ENCODE measurements at regions of chr1 and their contacts with region 1.

Region 1: GRCh38 chr1:145891587-145892485 is 6.2 kb upstream of the ANKRD35 start:
- DNase-seq: peak; percentile 96
- H3K4me3 ChIP-seq: peak overlapping the region; percentile 16
- H3K27ac ChIP-seq: peak overlapping the region; percentile 54
- H3K4me1 ChIP-seq: peaks cover 20% of the 10 kb centered on the region
- H3K27me3 ChIP-seq: no peaks in the 10 kb centered on the region
- CTCF ChIP-seq: peak; percentile 98

Region 2: GRCh38 chr1:145740266-145740665 is 151.6 kb before region 1 on chr1:
- CTCF ChIA-PET with region 1: interaction called, 10 read pairs
- POLR2A ChIA-PET with region 1: no interaction called
- intact Hi-C with region 1: no loop called
- DNase-seq: no peak
- H3K4me3 ChIP-seq: no peak overlapping the region
- H3K27ac ChIP-seq: no peak overlapping the region
- H3K4me1 ChIP-seq: no peaks in the 10 kb centered on the region
- H3K27me3 ChIP-seq: no peaks in the 10 kb centered on the region
- CTCF ChIP-seq: no peak

Region 3: DNA sequence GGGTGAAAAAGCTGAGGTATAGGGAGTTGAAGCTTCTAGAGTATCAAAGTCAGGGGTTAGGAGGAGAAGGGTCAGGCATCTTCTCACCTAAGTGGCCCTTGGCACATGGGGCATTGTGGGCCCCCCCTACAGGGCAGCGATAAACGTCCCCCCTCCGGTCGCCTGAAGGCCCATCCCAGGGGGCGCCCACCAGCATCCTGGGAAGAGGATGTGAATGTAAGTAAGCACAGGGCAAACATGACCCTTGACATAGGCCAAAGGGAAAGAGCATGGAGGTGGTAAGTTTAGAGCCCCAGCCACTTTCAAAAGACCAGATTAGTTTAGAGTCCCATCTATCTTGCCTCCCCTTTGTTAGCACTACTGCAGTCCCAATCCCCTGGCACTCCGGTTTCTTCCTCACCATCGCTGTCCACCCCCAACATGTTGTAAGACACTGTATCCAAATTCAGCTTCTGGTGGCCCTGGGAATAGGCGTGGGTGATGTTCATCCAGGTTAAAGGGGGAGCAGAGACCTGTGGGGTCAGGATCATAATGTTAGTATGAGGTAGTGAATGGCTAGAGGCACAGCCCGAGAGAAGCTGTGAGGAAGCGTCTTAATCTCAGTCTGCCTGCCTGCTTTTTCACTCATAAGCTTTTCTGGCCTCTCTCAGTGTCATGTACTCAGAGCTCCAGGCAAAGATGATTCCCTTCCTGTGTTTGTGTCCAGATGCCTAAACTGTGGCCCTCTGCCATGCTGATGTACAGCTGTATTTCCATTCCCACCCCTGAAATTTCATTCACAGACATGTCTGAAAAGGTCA is 15.3 kb after region 1 on chr1:
- CTCF ChIA-PET with region 1: interaction called, 13 read pairs
- POLR2A ChIA-PET with region 1: no interaction called
- intact Hi-C with region 1: loop called (anchors 1 kb)
- DNase-seq: no peak
- H3K4me3 ChIP-seq: no peak overlapping the region
- H3K27ac ChIP-seq: no peak overlapping the region
- H3K4me1 ChIP-seq: peaks cover 3% of the 10 kb centered on the region
- H3K27me3 ChIP-seq: no peaks in the 10 kb centered on the region
- CTCF ChIP-seq: no peak

Region 4: GRCh38 chr1:145912128-145912641 is 20.3 kb after region 1 on chr1:
- CTCF ChIA-PET with region 1: interaction called, 13 read pairs
- POLR2A ChIA-PET with region 1: no interaction called
- intact Hi-C with region 1: loop called (anchors 1 kb)
- DNase-seq: no peak
- H3K4me3 ChIP-seq: no peak overlapping the region
- H3K27ac ChIP-seq: no peak overlapping the region
- H3K4me1 ChIP-seq: peaks cover 3% of the 10 kb centered on the region
- H3K27me3 ChIP-seq: no peaks in the 10 kb centered on the region
- CTCF ChIP-seq: no peak

Region 5: DNA sequence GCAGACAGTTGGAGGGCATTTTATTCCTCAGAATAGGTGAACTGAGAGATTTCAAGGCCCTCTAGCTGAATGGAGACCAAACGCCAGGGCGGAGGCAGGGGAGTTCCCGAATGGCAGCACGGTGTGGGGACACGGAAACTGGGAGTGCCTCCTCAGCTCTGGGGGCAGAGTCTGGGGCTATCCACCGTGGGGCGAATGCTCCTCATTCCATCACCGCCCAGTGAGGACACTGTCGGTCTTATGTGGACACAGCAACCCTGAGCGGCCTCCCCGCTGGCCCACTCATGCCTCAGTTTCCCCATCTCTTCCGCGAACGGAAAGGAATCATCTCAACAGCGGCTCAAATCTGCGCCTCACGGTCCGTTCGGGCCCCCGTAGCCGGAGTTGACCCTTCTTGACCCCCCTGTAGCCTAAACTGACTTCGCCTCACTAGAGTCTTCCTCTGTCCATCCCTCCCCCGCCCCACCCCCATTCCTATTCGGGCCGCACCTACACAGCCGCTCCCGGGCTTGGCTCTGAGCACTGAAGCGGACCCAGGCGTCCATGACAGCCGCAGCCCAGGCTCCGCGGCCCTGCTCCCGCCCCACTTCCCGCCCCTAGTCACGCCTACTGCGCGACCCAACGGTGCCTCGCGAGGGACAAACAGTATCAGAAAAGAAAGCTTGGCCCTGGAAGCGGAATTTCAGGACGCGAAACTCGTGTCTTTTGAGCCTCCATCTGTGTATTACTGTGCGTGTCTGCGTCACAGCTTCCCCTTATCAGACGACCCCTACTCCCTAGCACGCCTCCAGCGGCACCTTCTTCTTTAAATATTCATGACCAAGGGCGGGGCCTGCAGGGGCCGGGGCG is 26.5 kb after region 1 on chr1 and contains the start of gene PEX11B:
- CTCF ChIA-PET with region 1: no interaction called
- POLR2A ChIA-PET with region 1: no interaction called
- intact Hi-C with region 1: loop called (anchors 2 kb)
- DNase-seq: peak; percentile 94
- H3K4me3 ChIP-seq: peak within 1 kb of the TSS; percentile 78
- H3K27ac ChIP-seq: peak within 1 kb of the TSS; percentile 94
- H3K4me1 ChIP-seq: peaks cover 16% of the 10 kb centered on the region
- H3K27me3 ChIP-seq: no peaks in the 10 kb centered on the region
- CTCF ChIP-seq: no peak
- total RNA-seq, gene PEX11B: 22.1 and 22.4 TPM in 2 replicates

Region 6: DNA sequence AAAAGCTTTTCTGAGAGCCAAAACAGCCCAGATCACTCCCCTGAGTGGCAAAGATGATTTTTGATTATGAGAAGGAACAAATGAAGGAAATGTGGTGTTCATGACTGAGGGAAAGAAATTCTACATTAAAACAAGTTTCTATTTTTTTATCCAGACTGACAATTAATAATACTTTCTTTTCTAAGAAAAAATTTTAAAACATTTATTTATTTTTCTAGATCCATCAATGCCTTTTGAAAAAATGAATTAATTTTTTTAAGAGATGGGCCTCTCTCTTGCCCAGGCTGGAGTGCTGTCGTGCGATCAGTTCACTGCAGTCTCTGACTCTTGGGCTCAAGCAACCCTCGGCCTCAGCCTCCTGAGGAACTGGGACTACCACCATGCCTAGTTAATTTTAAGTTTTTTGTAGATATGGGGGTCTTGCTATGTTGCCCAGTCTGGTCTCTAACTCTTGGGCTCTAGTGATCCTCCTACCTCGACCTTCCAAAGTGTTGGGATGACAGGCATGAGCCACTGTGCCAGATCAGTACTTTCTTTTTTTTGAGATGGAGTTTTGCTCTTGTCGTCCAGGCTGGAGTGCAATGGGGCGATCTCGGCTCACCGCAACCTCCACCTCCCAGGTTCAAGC is 115.8 kb after region 1 on chr1:
- CTCF ChIA-PET with region 1: interaction called, 8 read pairs
- POLR2A ChIA-PET with region 1: no interaction called
- intact Hi-C with region 1: loop called (anchors 2 kb)
- DNase-seq: no peak
- H3K4me3 ChIP-seq: no peak overlapping the region
- H3K27ac ChIP-seq: no peak overlapping the region
- H3K4me1 ChIP-seq: peaks cover 3% of the 10 kb centered on the region
- H3K27me3 ChIP-seq: no peaks in the 10 kb centered on the region
- CTCF ChIP-seq: no peak; the same call in 1 of the 2 replicates

Region 7: DNA sequence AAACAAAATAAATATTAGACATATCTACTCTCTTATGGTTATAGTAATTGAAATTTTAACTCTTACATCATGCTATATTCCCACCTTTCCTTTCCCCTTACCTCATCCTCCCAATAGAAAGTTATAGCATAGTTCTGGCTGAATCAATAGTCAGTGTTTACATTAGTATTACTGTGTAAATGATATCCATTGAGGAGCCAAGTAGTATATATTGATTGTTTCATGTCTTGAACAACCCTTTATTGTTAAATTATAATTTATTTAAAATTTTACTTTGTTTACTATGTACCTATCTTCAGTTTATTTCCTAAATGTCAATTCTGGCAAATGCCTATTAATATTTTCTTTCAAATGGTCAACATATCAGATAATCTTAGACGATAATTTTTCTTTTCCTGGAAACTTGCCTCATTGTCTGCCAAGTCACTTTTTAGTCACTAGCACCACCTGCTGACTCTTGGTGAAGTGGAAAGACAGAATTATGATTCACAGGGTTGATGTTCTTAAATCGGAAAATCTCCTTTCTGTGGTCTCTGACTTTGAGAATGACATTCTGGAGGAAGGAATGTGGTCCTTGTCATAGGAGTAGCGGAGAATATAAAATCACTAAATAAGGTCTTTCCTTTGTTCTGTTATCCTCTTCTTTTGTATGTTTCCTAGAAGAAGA is 121.0 kb after region 1 on chr1:
- CTCF ChIA-PET with region 1: interaction called, 8 read pairs
- POLR2A ChIA-PET with region 1: no interaction called
- intact Hi-C with region 1: loop called (anchors 2 kb)
- DNase-seq: peak; percentile 84
- H3K4me3 ChIP-seq: no peak overlapping the region
- H3K27ac ChIP-seq: no peak overlapping the region
- H3K4me1 ChIP-seq: no peaks in the 10 kb centered on the region
- H3K27me3 ChIP-seq: no peaks in the 10 kb centered on the region
- CTCF ChIP-seq: peak; percentile 89